ENCODE measurements at regions of chr14 and their contacts with region 1.

Region 1: GRCh38 chr14:93184388-93185353 is at the starts of genes LYSET and MOAP1:
- DNase-seq: peak; percentile 91

Region 2: DNA sequence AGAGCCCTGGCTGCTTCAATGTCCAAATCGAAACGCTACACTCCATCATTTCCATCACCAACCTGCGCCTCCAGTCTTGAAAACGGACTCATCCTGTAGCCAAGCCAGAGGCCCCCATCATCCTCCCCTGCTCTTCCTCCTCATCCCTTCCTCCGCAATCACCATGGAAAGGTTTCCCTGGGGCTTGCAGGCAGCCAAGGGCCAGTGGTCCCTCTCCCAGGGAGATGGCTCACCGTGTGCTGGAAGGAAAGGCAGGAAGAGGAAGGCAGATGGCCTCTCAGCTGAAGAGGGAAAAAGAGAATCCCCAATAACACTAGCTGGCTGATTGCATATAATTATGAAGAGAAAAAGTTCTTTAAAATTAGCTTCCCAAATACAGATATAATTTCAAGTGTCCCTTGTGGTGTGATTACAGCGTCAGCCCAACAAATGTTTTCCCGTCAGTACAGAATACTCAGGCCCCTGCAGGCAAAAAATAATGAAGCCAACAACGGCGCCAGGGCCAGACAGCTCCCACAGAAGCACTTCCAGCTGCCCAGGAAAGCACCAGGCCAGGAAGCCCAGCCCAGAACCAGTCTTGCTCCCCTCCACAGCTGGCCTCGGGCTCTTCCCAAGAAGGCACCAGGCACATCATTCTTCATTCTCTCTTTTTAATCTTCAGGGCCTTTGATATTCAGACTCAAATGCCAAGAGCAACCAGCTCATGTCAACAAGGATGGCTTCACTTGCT is 93.7 kb before region 1 on chr14:
- CTCF ChIA-PET with region 1: no interaction called
- POLR2A ChIA-PET with region 1: no interaction called
- DNase-seq: no peak

Region 3: GRCh38 chr14:93173943-93174395 is 10.7 kb before region 1 on chr14:
- CTCF ChIA-PET with region 1: interaction called, 3 read pairs
- POLR2A ChIA-PET with region 1: interaction called, 29 read pairs
- DNase-seq: no peak

Region 4: GRCh38 chr14:93195316-93195999 is 10.8 kb after region 1 on chr14:
- CTCF ChIA-PET with region 1: no interaction called
- POLR2A ChIA-PET with region 1: interaction called, 13 read pairs
- DNase-seq: no peak

Region 5: DNA sequence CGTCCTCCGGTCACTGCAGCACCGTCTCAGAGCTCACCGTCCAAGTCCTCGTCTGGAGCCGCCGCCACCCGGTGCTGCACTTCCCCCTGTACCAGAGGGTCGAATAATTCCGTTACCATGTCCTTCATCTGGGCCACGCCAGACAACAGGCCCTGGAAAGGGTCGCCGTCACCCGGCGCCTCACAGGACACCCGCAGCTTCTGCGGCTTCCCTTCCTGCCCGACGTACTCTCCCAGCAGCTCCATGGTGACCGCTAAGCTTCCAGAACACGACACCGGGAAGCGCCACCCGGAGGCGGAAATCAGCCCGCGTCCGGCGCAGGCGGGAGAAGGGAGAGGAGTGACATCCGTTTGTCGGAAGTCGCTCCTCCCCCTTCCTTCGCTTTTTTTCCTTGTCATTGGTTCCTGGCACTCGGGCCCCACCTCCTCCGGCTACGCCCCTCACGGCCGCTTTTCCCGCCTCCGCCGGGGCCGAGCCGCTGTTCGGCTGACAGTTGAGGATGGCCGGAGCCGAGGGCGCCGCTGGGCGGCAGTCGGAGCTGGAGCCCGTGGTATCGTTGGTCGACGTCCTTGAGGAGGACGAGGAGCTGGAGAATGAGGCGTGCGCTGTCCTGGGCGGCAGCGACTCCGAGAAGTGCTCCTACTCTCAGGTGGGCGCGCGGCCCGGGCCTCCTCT is 22.3 kb after region 1 on chr14 and contains the starts of genes GON7 and UBR7:
- CTCF ChIA-PET with region 1: interaction called, 3 read pairs
- POLR2A ChIA-PET with region 1: interaction called, 43 read pairs
- DNase-seq: peak; percentile 93